ENCODE measurements at regions of chr14 and their contacts with region 1.

Region 1: DNA sequence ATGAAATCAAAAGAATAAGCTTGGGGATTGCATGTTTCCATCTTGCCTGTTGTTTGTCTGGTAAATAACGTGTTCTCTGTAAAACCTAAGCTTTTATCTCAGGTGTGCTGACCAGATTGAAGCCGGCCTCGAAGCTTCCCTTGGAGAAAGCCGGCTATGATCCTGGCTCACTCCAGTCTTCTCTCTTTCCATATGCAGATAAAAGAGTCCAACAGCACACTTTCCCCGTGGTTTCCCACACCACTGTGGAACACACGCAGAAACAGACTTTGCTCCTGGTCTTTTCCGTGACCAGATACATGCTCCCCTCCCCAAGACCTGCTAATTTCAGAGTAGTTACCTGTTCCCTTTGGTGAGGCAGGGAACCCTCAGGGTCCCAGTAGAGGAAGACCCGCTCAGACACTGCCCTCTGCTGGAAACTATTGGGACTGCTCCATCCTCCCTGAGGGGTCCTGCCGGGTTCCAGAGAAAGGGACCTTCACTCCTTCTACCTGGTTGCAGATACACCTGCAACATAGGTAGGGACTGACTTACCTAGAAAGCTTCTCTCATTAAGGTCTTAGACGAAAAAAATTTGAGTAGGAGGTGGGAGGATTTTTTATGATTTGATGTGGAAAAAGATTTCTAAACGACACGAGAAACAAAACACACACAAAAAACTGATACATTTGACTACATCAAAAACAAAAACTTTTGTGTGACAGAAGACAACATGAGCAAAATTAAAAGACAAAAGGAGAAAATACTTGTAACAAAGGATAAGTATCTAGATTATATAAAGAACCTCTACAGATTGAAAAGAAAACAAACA is 415.5 kb upstream of the CCDC196 start:
- DNase-seq: peak; percentile 64
- CTCF ChIP-seq: peak; percentile 81

Region 2: GRCh38 chr14:65772921-65773574 is 297.7 kb before region 1 on chr14:
- CTCF ChIA-PET with region 1: no interaction called
- POLR2A ChIA-PET with region 1: no interaction called
- DNase-seq: no peak
- CTCF ChIP-seq: no peak

Region 3: GRCh38 chr14:66056926-66057552 is 13.7 kb before region 1 on chr14:
- CTCF ChIA-PET with region 1: interaction called, 15 read pairs
- POLR2A ChIA-PET with region 1: interaction called, 7 read pairs
- DNase-seq: no peak
- CTCF ChIP-seq: no peak

Region 4: DNA sequence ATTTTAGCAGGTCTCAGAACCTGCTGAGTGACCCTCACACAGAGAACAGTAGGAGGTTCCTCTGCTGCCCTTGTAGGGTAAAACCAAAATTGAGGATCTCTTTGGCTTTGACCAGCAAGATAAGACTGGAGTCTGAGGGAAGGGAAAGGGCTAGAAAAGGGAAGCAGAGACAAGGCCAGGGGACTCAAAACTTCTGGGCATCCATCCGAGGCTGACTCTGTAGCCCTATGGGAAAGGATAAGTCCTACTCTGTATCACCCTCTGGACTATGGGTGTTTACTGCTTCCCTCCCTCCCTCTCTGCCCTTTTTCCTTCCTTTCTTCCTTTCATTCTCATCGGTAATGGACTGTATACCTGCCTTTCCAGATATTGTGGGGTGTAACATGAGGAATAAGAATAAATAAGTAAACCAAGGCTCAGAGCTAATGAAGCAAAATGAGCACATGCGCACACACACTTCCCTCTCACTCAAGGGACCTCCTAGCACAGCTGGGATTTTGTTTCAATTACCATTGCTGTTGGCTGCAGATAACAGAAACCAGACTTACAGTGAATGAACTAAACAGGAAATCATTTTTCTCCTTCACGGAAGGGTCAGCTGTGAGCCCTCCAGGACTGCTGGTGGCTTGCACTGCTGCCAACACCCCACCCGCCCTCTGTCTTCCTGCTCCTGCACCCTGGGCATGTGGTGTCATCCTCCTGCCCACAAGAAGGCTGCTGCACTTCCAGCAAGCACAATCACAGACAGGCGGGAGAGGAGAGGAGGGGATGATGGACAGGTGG is 11.1 kb after region 1 on chr14:
- CTCF ChIA-PET with region 1: no interaction called
- POLR2A ChIA-PET with region 1: no interaction called
- DNase-seq: no peak
- CTCF ChIP-seq: no peak